ENCODE measurements at regions of chr6 and their contacts with region 1.

Region 1: DNA sequence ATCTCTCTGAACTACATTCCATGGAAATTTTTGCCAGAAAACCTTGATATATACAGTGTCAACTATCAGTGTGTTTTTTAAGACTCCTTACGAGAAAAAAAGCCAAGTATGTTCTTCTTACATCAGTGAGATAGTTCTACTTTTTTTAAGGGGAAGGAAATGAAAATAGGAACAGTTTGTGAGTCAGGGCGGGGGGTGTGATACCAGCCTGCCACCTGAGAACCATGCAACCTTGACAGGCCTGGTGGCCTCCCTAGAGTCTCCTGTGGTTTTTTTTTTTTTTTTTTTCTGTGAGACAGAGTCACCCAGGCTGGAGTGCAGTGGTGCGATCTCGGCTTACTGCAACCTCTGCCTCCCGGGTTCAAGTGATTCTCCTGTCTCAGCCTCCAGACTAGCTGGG is 96.3 kb upstream of the GCM1 start:
- DNase-seq: peak; percentile 65
- H3K4me3 Mint-ChIP-seq: no peak overlapping the region
- H3K27ac Mint-ChIP-seq: no peak overlapping the region
- H3K4me1 Mint-ChIP-seq: peaks cover 37% of the 10 kb centered on the region
- H3K27me3 Mint-ChIP-seq: no peaks in the 10 kb centered on the region

Region 2: DNA sequence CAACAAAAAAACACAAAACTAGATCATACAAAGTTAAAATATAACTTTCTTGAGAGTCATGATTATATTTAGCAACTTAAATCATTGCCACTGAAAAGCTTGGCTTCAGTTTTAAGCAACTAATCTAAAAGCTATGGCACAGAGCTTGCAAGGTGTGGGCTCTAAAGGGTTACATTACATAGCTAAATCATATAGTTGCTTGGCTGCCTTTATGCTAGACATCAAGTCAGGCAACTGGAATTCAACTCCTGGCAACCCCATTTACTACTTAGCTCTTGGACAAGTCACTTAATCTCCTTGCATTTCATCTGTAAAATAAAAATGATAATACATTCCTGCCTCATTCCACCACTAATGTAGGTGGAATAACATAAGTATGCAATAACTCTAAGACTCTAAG is 55.4 kb before region 1 on chr6:
- CTCF ChIA-PET with region 1: no interaction called
- intact Hi-C with region 1: loop called (anchors 1 kb)
- DNase-seq: no peak
- H3K4me3 Mint-ChIP-seq: no peak overlapping the region
- H3K27ac Mint-ChIP-seq: no peak overlapping the region
- H3K4me1 Mint-ChIP-seq: peaks cover 14% of the 10 kb centered on the region
- H3K27me3 Mint-ChIP-seq: no peaks in the 10 kb centered on the region

Region 3: GRCh38 chr6:53335208-53335994 is 90.4 kb after region 1 on chr6:
- CTCF ChIA-PET with region 1: no interaction called
- intact Hi-C with region 1: no loop called
- DNase-seq: peak; percentile 79
- H3K4me3 Mint-ChIP-seq: peak overlapping the region; percentile 80
- H3K27ac Mint-ChIP-seq: peak overlapping the region; percentile 99
- H3K4me1 Mint-ChIP-seq: peaks cover 85% of the 10 kb centered on the region
- H3K27me3 Mint-ChIP-seq: no peaks in the 10 kb centered on the region

Measured in activated naive CD4-positive, alpha-beta T cell treated with anti-CD3 and anti-CD28 coated beads for 36 hours (primary cell).